Stomach (tissue), 19 donors: ENCODE measurements at regions of chr1 and their contacts with region 1.

Region 1: DNA sequence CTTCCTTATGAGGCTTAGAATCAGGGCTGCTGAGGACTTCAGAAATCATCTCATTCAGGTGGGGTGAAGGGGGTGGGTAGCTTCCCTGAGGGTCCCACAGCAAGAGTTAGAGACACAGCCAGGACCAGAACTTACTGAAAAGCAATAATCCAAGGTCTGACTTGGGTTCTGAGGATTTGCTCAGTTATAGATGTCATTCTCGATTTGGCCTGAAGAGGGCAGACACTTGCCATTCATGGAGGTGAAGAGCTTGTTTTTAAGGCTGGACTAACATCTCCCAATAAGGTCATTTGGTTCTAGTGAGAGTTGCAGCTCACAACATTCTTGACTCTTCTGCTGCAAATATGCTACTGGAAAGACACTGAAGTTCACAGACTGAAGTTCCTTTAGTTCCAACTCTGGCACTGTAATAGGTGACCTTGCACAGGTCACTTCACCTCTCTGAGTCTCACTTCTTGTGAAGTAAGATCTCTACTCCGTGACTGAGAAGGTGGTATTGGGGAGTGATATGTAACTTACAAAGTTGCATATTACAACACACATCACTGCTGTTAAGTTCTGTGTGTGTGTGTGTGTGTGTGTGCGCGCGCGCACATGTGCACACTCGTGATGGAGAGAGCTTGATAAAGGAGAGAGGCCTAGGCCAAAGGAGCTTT is 69.8 kb upstream of the DIRAS3 start:
- DNase-seq: peak; percentile 47 to 89
- H3K4me3 ChIP-seq: no peak overlapping the region
- H3K27ac ChIP-seq: peak overlapping the region in 4 of 5 donors; percentile 40 to 63 (median 51)
- H3K4me1 ChIP-seq: peaks cover 0 to 23% (median 8%) of the 10 kb centered on the region in 4 donors
- H3K27me3 ChIP-seq: no peaks in the 10 kb centered on the region
- CTCF ChIP-seq: peak in 6 of 7 experiments; percentile 27 to 91 (median 75)
- EP300 ChIP-seq: no peak
- POLR2A ChIP-seq: no peak

Region 2: GRCh38 chr1:67937010-67937409 is 183.3 kb before region 1 on chr1:
- intact Hi-C with region 1: no loop called
- DNase-seq: no peak
- H3K4me3 ChIP-seq: no peak overlapping the region
- H3K27ac ChIP-seq: no peak overlapping the region
- H3K4me1 ChIP-seq: peaks cover 0 to 9% (median 0%) of the 10 kb centered on the region in 4 donors
- H3K27me3 ChIP-seq: no peaks in the 10 kb centered on the region
- CTCF ChIP-seq: no peak
- EP300 ChIP-seq: no peak
- POLR2A ChIP-seq: no peak

Region 3: GRCh38 chr1:68232354-68233148 is 112.3 kb after region 1 on chr1 and contains the start of gene WLS:
- intact Hi-C with region 1: loop called (anchors 10 kb)
- DNase-seq: peak; percentile 83 to 94
- H3K4me3 ChIP-seq: peak within 1 kb of the TSS; percentile 69 to 76 (median 75)
- H3K27ac ChIP-seq: peak within 1 kb of the TSS; percentile 88 to 92 (median 91)
- H3K4me1 ChIP-seq: peaks cover 0 to 36% (median 30%) of the 10 kb centered on the region in 4 donors
- H3K27me3 ChIP-seq: peaks cover 0 to 5% (median 0%) of the 10 kb centered on the region in 3 donors
- CTCF ChIP-seq: no peak
- EP300 ChIP-seq: no peak
- POLR2A ChIP-seq: peak in 2 of 4 donors; percentile 41 to 66
- total RNA-seq, gene WLS: 56.2 to 194 (median 92.2) TPM

Region 4: DNA sequence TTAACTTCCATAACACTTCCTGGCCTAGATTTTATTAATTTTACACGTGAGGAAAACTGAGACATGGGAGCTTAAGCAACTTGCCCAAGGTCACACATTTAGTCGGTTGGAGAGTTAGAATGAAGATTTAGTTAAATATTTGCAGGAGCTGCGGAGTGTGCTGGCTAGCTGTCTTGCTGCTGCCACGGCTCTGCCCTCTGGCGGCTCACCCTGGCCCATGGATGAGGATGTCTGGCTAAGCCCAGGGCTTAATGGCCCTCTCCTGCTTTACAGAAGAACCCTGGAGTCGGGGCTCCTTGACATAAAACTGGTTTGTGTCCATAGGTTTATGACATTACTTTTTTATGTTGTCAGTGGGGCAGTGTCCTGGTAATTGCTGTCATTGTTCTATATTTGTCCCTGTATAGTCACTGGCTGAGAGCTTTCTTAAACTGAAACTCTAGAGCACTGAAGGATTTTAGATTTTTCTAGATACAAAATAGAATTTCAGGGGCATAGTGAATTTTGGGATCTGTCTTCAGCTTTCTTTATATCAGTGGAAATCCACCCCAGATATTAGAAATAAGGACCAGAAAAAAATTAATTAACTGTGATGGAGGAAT is 200.9 kb after region 1 on chr1:
- intact Hi-C with region 1: loop called (anchors 5 kb)
- DNase-seq: peak; percentile 82 to 89
- H3K4me3 ChIP-seq: no peak overlapping the region
- H3K27ac ChIP-seq: peak overlapping the region in 1 of 5 donors; percentile 58
- H3K4me1 ChIP-seq: peaks cover 0 to 40% (median 0%) of the 10 kb centered on the region in 4 donors
- H3K27me3 ChIP-seq: no peaks in the 10 kb centered on the region
- CTCF ChIP-seq: peak in 5 of 7 experiments; percentile 58 to 75 (median 71)
- EP300 ChIP-seq: no peak
- POLR2A ChIP-seq: no peak

Region 5: GRCh38 chr1:68346188-68346808 is 226.0 kb after region 1 on chr1:
- intact Hi-C with region 1: loop called (anchors 5 kb)
- DNase-seq: peak in 1 of 2 donors; percentile 40
- H3K4me3 ChIP-seq: no peak overlapping the region
- H3K27ac ChIP-seq: no peak overlapping the region
- H3K4me1 ChIP-seq: peaks cover 0 to 10% (median 3%) of the 10 kb centered on the region in 4 donors
- H3K27me3 ChIP-seq: no peaks in the 10 kb centered on the region
- CTCF ChIP-seq: peak in 3 of 7 experiments; percentile 28 to 42 (median 34)
- EP300 ChIP-seq: no peak
- POLR2A ChIP-seq: no peak

Region 6: GRCh38 chr1:68938051-68938666 is 817.9 kb after region 1 on chr1:
- intact Hi-C with region 1: no loop called
- DNase-seq: no peak
- H3K4me3 ChIP-seq: no peak overlapping the region
- H3K27ac ChIP-seq: no peak overlapping the region
- H3K4me1 ChIP-seq: no peaks in the 10 kb centered on the region
- H3K27me3 ChIP-seq: no peaks in the 10 kb centered on the region
- CTCF ChIP-seq: no peak
- EP300 ChIP-seq: no peak
- POLR2A ChIP-seq: no peak